ENCODE measurements at regions of chr3 and their contacts with region 1.

Region 1: GRCh38 chr3:35724106-35724505 is 84.8 kb downstream of the ARPP21 start:
- DNase-seq: no peak
- H3K4me3 Mint-ChIP-seq: no peak overlapping the region
- H3K27ac Mint-ChIP-seq: no peak overlapping the region
- H3K4me1 Mint-ChIP-seq: no peaks in the 10 kb centered on the region
- H3K27me3 Mint-ChIP-seq: no peaks in the 10 kb centered on the region

Region 2: DNA sequence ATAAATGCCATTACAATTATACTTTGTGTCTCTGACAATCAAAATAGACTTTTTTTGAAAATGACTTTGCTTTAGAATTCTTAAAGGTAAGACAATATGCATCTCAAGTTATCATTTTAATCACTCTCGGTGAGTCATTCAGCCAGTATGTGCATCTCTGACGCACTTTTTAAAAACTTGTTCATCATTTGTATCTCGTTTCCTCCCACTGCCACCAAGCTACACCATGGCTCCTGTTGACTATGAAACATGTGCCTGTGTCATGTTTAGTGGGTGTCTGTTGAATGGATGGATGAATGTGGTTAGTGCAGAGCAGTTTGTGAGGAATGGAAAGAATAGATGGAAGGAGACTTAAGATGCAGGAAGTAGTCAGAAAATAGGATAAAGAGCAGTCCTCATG is 16.2 kb before region 1 on chr3:
- CTCF ChIA-PET with region 1: no interaction called
- intact Hi-C with region 1: loop called (anchors 1 kb)
- DNase-seq: peak; percentile 33
- H3K4me3 Mint-ChIP-seq: no peak overlapping the region
- H3K27ac Mint-ChIP-seq: no peak overlapping the region
- H3K4me1 Mint-ChIP-seq: peaks cover 7% of the 10 kb centered on the region
- H3K27me3 Mint-ChIP-seq: no peaks in the 10 kb centered on the region